ENCODE measurements at regions of chr17 and their contacts with region 1.

Region 1: GRCh38 chr17:31433091-31433790 is 41.8 kb downstream of the RAB11FIP4 start:
- DNase-seq: no peak
- CTCF ChIP-seq: no peak

Region 2: DNA sequence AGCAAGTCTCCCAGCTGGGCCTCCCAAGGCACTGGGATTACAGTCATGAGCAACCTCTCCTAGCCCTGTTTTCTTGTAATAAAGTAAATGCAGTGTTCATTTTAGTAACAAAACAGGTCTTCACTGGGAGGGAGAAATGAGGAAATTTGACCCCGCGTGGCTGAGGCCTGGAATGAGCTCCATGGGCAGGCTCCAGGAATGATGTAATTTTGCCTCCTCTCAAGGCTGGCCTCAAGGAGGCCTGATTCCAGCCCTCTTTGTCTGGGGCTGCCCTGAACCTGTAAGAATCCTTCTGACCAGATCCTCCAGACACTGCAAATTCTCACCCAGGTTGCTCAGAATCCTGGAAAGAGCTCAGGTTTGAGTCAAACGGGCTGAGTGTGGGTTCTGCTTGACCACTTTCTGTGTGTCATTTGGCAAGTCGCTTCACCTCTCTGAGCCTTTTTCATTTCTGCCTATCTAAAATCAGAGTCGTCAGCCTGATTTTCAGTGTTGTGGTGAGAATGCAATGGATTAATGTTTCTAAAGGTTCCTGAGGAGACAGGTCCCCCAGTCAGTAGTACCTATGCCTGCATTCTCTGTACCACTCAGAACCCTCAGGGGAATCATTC is 15.3 kb after region 1 on chr17:
- CTCF ChIA-PET with region 1: interaction called, 17 read pairs
- POLR2A ChIA-PET with region 1: interaction called, 4 read pairs
- DNase-seq: no peak
- CTCF ChIP-seq: no peak

Region 3: DNA sequence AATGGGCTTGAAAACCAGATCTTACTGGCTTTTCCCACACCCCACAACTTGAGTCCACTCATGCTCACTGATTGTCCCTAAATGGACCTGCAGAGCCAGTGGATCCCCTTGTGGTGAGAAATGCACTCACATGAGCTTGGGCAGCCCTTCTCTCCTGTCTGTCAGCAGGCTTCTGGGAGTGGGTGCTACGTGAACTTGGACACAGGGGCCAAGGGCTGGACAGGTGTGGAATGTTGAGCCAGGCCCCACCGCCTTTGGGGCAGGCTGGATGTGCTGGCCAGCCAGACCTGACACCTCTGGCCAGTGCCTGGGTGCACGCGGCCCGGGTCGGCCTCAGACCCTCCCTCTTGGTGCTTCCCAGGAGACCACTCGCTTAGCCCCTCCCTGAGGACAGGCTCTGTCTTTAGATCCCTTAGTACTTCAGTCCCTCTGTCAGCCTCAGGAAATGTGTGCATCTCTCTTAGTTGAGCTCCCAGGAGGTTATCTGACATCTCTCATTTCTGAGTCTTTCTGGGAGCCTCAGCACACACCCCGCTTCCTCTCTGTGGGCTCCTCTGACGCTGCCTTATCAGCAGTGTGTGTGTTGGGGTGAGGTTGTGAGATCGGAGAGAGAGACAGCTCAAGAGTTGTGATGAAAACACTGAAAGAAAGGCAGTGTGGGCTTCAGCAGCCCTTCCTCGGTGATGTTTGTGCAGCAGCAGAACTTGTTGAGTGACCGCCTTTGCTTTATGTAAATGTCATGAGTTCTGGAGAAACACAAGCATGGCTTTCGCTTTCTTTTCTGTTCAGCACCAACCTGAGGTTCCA is 75.2 kb after region 1 on chr17:
- CTCF ChIA-PET with region 1: interaction called, 13 read pairs
- POLR2A ChIA-PET with region 1: no interaction called
- DNase-seq: peak; percentile 73
- CTCF ChIP-seq: peak; percentile 58

Region 4: DNA sequence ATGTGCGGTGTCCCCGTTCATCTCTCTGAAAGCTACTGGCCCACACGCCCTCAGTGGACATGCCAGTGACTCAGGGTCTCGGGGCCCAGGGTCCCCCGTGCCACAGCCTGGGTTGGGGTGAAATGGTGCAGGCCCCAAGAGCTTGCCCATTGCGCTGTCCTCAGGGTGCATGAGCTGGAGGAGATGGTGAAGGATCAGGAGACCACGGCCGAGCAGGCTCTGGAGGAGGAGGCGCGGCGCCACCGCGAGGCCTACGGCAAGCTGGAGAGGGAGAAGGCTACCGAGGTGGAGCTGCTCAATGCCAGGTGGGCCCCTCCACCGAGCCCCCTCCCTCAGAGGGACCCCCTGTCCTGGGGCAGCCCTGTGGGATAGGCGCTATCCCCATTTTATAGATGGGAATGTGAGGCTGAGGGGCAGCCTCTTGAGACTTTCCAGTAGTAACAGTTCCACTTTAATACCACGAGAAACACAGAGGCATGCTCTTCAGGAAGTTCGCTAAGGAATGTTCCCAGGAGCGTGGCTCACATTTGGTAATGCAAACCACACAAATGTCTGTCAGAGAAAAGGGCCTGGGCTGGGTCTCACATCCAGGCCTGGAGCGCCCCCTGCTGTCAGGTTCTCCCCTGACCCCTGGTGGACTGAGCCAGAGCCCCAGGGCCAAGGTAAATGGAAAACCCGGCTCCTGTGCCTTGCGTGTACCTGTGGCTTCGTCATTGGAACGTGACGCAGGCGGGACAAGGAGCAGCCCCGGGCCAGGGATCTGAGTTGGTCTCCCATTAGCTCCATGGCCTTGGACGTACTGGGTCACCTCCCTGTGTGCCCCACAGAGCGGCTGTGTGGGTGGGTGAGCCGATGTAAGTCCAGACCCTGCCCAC is 91.9 kb after region 1 on chr17:
- CTCF ChIA-PET with region 1: interaction called, 178 read pairs
- POLR2A ChIA-PET with region 1: no interaction called
- DNase-seq: peak; percentile 88
- CTCF ChIP-seq: peak; percentile 90

Region 5: DNA sequence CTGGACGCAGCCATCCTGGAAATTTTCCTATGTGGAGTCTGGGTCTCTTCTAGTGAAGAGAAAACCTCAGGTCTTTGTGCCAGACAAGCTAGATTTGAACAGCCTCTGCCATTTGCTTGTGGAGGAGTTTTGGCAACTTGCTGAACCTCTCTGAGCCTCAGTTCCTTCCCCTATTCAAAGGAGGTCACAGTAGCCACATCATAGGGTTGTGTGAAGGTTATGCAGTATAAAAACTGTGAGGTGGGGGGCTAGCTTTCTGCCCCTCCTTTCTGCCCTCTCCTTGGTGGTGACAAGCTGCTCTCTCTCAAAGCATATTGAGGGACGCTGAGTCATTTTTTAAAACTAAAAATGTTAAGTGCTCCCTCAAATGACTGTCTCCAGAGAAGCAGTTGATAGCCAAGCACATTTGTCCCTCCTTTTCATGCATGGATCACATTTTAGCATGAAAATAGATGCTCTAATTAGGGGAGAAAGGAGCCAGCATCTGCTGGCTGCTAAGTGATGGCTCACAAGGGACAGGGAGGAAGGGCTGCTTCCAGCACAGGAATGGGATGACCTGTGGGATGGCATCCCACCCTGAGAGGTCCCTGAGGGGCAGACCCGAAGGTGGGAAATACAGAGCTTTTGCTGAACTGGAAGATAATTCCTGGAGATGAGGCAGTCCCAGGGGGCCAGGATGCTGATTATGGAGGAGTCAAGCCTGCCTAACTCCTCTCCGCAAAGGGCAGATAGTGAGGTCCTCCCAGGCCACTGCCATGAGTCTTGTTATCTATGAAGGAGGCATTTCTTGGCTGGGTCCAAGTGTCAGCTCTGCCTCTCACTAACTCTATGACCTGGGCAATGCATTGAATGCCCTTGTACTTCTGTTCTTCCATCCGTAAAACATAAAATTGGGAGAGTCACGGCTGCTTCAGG is 177.0 kb after region 1 on chr17:
- CTCF ChIA-PET with region 1: no interaction called
- POLR2A ChIA-PET with region 1: no interaction called
- DNase-seq: no peak
- CTCF ChIP-seq: no peak